ENCODE measurements at regions of chr4 and their contacts with region 1.

Region 1: GRCh38 chr4:102868781-102869568 is at the start of gene CISD2:
- DNase-seq: peak; percentile 91 to 93
- ATAC-seq: peak; percentile 97 to 100 (median 97)
- H3K4me3 ChIP-seq: peak within 1 kb of the TSS; percentile 49 to 82 (median 71)
- H3K27ac ChIP-seq: peak within 1 kb of the TSS; percentile 82 to 97 (median 92)
- H3K4me1 ChIP-seq: peaks cover 0 to 49% (median 19%) of the 10 kb centered on the region in 9 donors
- H3K27me3 ChIP-seq: no peaks in the 10 kb centered on the region
- CTCF ChIP-seq: peak in 1 of 9 donors; percentile 8
- total RNA-seq, gene CISD2: 12.1 to 22.1 (median 16.9) TPM

Region 2: GRCh38 chr4:102760645-102761295 is 108.2 kb before region 1 on chr4 and contains the start of gene MANBA:
- intact Hi-C with region 1: loop called in 1 of 10 experiments (anchors 5 kb)
- DNase-seq: peak; percentile 84 to 86
- ATAC-seq: peak; percentile 97 to 99 (median 98)
- H3K4me3 ChIP-seq: peak within 1 kb of the TSS; percentile 74 to 97 (median 84)
- H3K27ac ChIP-seq: peak within 1 kb of the TSS; percentile 11 to 94 (median 80)
- H3K4me1 ChIP-seq: peaks cover 0 to 40% (median 17%) of the 10 kb centered on the region in 9 donors
- H3K27me3 ChIP-seq: no peaks in the 10 kb centered on the region
- CTCF ChIP-seq: peak in 3 of 9 donors; percentile 10 to 29 (median 11)
- total RNA-seq, gene MANBA: 17.9 to 47.7 (median 28.5) TPM

Region 3: GRCh38 chr4:102780476-102781144 is 88.4 kb before region 1 on chr4:
- intact Hi-C with region 1: no loop called
- DNase-seq: no peak
- ATAC-seq: peak in 1 of 8 donors; percentile 25
- H3K4me3 ChIP-seq: no peak overlapping the region
- H3K27ac ChIP-seq: no peak overlapping the region
- H3K4me1 ChIP-seq: no peaks in the 10 kb centered on the region
- H3K27me3 ChIP-seq: no peaks in the 10 kb centered on the region
- CTCF ChIP-seq: no peak

Region 4: GRCh38 chr4:102826890-102827673 is 41.9 kb before region 1 on chr4 and contains the start of gene UBE2D3:
- intact Hi-C with region 1: loop called in 9 of 10 experiments (anchors 1 to 5 kb)
- DNase-seq: peak; percentile 94 to 95
- ATAC-seq: peak; percentile 72 to 87 (median 75)
- H3K4me3 ChIP-seq: peak within 1 kb of the TSS; percentile 71 to 94 (median 88)
- H3K27ac ChIP-seq: peak within 1 kb of the TSS; percentile 97 to 100 (median 100)
- H3K4me1 ChIP-seq: peaks cover 2 to 54% (median 40%) of the 10 kb centered on the region in 9 donors
- H3K27me3 ChIP-seq: no peaks in the 10 kb centered on the region
- CTCF ChIP-seq: peak in 3 of 9 donors; percentile 17 to 38 (median 33)
- total RNA-seq, gene UBE2D3: 210 to 297 (median 250) TPM

Region 5: DNA sequence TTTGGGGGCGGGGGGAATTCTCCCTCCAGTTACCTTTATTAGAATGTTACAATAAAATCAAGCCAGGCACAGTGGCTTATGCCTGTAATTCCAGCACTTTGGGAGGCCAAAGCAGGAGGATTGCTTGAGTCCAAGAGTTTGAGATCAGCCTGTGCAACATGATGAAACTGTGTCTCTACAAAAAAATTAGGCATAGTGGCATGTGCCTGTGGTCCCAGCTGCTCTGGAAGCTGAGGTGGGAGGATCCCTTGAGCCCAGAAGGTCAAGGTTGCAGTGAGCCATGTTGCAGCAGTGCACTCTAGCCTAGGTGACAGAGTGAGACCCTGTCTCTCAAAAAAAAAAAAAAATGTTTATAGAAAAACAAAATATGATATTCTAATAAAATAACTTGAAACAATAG is 36.3 kb before region 1 on chr4:
- intact Hi-C with region 1: loop called in 9 of 10 experiments (anchors 1 to 5 kb)
- DNase-seq: no peak
- ATAC-seq: no peak
- H3K4me3 ChIP-seq: no peak overlapping the region
- H3K27ac ChIP-seq: peak overlapping the region in 1 of 10 donors; percentile 18
- H3K4me1 ChIP-seq: peaks cover 0 to 42% (median 15%) of the 10 kb centered on the region in 9 donors
- H3K27me3 ChIP-seq: no peaks in the 10 kb centered on the region
- CTCF ChIP-seq: no peak

Region 6: DNA sequence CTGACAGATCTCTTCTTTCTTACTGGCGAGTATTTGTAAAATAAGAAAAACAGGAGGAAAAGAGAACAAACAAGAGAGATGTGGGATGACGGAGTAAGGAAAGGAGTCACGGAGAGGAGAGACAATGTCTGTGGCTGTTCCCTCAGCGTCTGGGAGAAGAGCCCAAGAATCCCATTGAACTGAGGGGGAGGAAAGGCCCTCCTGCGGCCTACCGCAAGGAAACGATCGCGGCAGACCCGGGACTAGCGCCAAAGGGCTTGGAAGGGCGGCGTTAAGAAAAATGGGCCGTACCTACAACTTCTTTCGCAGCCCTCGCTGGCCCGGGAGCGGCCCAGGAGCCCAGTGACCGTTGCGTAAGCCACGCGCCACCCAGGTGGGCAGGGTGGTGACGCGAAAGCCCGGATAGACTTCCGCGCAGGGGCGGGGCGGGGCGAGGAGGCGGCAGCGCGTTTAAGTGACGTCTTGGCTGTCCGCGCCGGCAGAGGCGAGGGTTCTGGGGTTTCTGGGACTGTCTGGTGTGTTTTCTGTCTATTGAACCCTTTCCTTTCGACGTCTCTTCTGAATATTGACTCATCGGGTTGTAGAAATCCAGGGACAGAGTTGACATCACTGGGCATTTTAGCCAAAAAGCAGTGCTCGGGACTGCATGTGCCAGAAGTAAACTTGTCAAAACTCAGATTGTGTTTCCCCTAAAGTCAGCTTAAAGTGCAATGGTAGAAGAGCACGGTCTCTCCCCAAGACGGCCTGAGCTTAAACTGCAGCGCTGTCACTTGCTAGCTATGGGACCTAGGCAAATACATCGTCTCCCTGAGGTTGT is 150.5 kb after region 1 on chr4 and contains the start of gene SLC9B1:
- intact Hi-C with region 1: loop called in 5 of 10 experiments (anchors 5 to 10 kb)
- DNase-seq: peak; percentile 94 to 95
- ATAC-seq: peak; percentile 99 to 100 (median 100)
- H3K4me3 ChIP-seq: peak within 1 kb of the TSS; percentile 36 to 64 (median 56)
- H3K27ac ChIP-seq: peak within 1 kb of the TSS; percentile 67 to 92 (median 90)
- H3K4me1 ChIP-seq: peaks cover 0 to 15% (median 7%) of the 10 kb centered on the region in 9 donors
- H3K27me3 ChIP-seq: no peaks in the 10 kb centered on the region
- CTCF ChIP-seq: no peak
- total RNA-seq, gene SLC9B1: 0.19 to 1.4 (median 0.67) TPM in 7 of 10 donors, not detected in the others

Measured in heart right ventricle (tissue), 16 donors.